Activated CD4-positive, alpha-beta memory T cell treated with anti-CD3 and anti-CD28 coated beads for 36 hours (primary cell): ENCODE measurements at regions of chr15 and their contacts with region 1.

Region 1: GRCh38 chr15:89129123-89129815 is 41.0 kb downstream of the ABHD2 start:
- DNase-seq: peak; percentile 68
- H3K4me3 Mint-ChIP-seq: no peak overlapping the region
- H3K27ac Mint-ChIP-seq: no peak overlapping the region
- H3K4me1 Mint-ChIP-seq: peaks cover 29% of the 10 kb centered on the region
- H3K27me3 Mint-ChIP-seq: no peaks in the 10 kb centered on the region

Region 2: GRCh38 chr15:89057504-89058133 is 71.7 kb before region 1 on chr15:
- CTCF ChIA-PET with region 1: interaction called, 157 read pairs
- POLR2A ChIA-PET with region 1: no interaction called
- intact Hi-C with region 1: loop called (anchors 1 kb)
- DNase-seq: peak; percentile 90
- H3K4me3 Mint-ChIP-seq: no peak overlapping the region
- H3K27ac Mint-ChIP-seq: no peak overlapping the region
- H3K4me1 Mint-ChIP-seq: peaks cover 11% of the 10 kb centered on the region
- H3K27me3 Mint-ChIP-seq: no peaks in the 10 kb centered on the region

Region 3: GRCh38 chr15:89112341-89112971 is 16.8 kb before region 1 on chr15:
- CTCF ChIA-PET with region 1: interaction called, 29 read pairs
- POLR2A ChIA-PET with region 1: no interaction called
- intact Hi-C with region 1: no loop called
- DNase-seq: no peak
- H3K4me3 Mint-ChIP-seq: no peak overlapping the region
- H3K27ac Mint-ChIP-seq: no peak overlapping the region
- H3K4me1 Mint-ChIP-seq: peaks cover 33% of the 10 kb centered on the region
- H3K27me3 Mint-ChIP-seq: no peaks in the 10 kb centered on the region

Region 4: GRCh38 chr15:89150762-89151664 is 21.7 kb after region 1 on chr15:
- CTCF ChIA-PET with region 1: interaction called, 10 read pairs
- POLR2A ChIA-PET with region 1: no interaction called
- intact Hi-C with region 1: no loop called
- DNase-seq: no peak
- H3K4me3 Mint-ChIP-seq: no peak overlapping the region
- H3K27ac Mint-ChIP-seq: no peak overlapping the region
- H3K4me1 Mint-ChIP-seq: no peaks in the 10 kb centered on the region
- H3K27me3 Mint-ChIP-seq: no peaks in the 10 kb centered on the region

Region 5: GRCh38 chr15:89177633-89178306 is 48.5 kb after region 1 on chr15:
- CTCF ChIA-PET with region 1: interaction called, 45 read pairs
- POLR2A ChIA-PET with region 1: interaction called, 3 read pairs
- intact Hi-C with region 1: no loop called
- DNase-seq: peak; percentile 77
- H3K4me3 Mint-ChIP-seq: no peak overlapping the region
- H3K27ac Mint-ChIP-seq: no peak overlapping the region
- H3K4me1 Mint-ChIP-seq: peaks cover 39% of the 10 kb centered on the region
- H3K27me3 Mint-ChIP-seq: no peaks in the 10 kb centered on the region